CD4-positive, alpha-beta T cell (primary cell): ENCODE measurements at regions of chr22 and their contacts with region 1.

Region 1: GRCh38 chr22:44684506-44685383 is 17.3 kb upstream of the PRR5 start:
- DNase-seq: peak; percentile 69 to 93 (median 78)
- ATAC-seq: peak; percentile 85
- H3K4me3 ChIP-seq: peak overlapping the region; percentile 13
- H3K4me3 Mint-ChIP-seq: peak overlapping the region; percentile 50
- H3K27ac ChIP-seq: no peak overlapping the region
- H3K27ac Mint-ChIP-seq: peak overlapping the region; percentile 24
- H3K4me1 ChIP-seq: peaks cover 57% of the 10 kb centered on the region
- H3K4me1 Mint-ChIP-seq: peaks cover 32% of the 10 kb centered on the region
- H3K27me3 ChIP-seq: no peaks in the 10 kb centered on the region
- H3K27me3 Mint-ChIP-seq: no peaks in the 10 kb centered on the region
- CTCF ChIP-seq: peak; percentile 98

Region 2: DNA sequence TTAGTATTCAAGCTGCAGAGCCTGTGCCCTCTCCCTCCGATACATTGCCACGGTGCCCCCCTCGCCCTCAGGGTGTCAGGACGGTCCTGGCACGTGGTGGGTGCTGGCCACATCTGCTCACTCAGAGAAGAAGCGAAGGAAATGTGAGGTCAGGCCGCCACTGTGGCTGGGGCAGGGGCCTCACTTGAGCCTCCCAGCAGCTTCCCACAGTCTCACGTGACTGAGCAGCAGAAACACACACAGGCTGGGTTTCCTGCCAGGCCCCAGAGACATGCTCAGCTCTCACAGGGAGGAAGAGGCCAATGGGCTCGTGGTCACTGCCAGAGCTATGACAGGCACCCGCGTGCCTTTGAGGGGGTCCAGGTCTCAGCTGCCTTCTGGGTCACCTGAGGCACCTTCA is 20.6 kb before region 1 on chr22:
- CTCF ChIA-PET with region 1: interaction called, 22 read pairs
- POLR2A ChIA-PET with region 1: interaction called, 5 read pairs
- intact Hi-C with region 1: loop called (anchors 1 to 2 kb)
- DNase-seq: peak in 13 of 14 experiments; percentile 19 to 85 (median 40)
- ATAC-seq: peak; percentile 12
- H3K4me3 ChIP-seq: no peak overlapping the region
- H3K4me3 Mint-ChIP-seq: peak overlapping the region; percentile 58
- H3K27ac ChIP-seq: peak overlapping the region in 1 of 2 donors; percentile 63
- H3K27ac Mint-ChIP-seq: peak overlapping the region; percentile 88
- H3K4me1 ChIP-seq: peaks cover 57% of the 10 kb centered on the region
- H3K4me1 Mint-ChIP-seq: peaks cover 46% of the 10 kb centered on the region
- H3K27me3 ChIP-seq: no peaks in the 10 kb centered on the region
- H3K27me3 Mint-ChIP-seq: no peaks in the 10 kb centered on the region
- CTCF ChIP-seq: no peak

Region 3: GRCh38 chr22:44669561-44669976 is 15.2 kb before region 1 on chr22:
- CTCF ChIA-PET with region 1: interaction called, 22 read pairs
- POLR2A ChIA-PET with region 1: interaction called, 5 read pairs
- intact Hi-C with region 1: loop called (anchors 1 to 2 kb)
- DNase-seq: peak in 2 of 14 experiments; percentile 29 to 47
- ATAC-seq: no peak
- H3K4me3 ChIP-seq: peak overlapping the region; percentile 69
- H3K4me3 Mint-ChIP-seq: peak overlapping the region; percentile 84
- H3K27ac ChIP-seq: no peak overlapping the region
- H3K27ac Mint-ChIP-seq: peak overlapping the region; percentile 57
- H3K4me1 ChIP-seq: peaks cover 71% of the 10 kb centered on the region
- H3K4me1 Mint-ChIP-seq: peaks cover 59% of the 10 kb centered on the region
- H3K27me3 ChIP-seq: no peaks in the 10 kb centered on the region
- H3K27me3 Mint-ChIP-seq: no peaks in the 10 kb centered on the region
- CTCF ChIP-seq: no peak